ENCODE measurements at regions of chr2 and their contacts with region 1.

Region 1: DNA sequence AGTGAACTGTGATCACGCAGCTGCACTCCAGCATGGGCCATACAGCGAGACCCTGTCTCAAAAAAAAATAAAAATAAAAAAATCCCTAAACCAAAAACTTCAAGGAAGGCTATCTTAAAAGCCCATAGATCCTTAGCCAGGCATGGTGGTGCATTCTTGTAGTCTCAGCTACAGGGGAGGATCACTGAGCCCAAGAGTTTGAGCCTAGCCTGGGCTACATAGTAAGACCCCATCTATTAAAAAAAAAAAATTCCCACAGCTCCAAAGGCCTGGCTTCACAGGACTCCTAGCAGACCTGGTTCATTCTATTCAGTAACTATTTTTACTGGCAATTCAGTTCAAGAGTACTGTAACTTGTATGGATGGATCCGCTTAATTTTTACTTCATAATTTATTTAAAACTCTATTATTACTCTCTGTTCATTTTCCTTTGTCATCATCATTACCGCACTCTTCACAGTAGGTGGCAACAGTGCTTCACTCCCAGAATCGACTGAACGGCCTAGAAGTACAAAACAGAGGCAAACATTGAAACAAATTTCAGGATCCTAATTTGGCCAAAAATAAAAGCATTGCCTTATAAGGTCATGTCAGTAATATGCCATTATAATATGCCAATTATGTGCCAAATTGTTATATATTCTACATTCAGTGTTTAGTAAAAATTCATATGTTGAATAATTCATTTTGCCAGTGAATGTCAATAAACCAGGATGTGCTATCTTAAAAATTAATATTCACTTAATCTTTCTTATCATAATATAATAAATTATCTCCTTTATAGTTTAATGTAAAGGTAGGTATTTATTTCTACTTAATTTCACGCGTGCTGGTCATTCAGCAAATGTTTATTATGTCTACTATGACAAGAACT is 14.3 kb upstream of the STAM2 start:
- DNase-seq: no peak
- H3K4me3 ChIP-seq: no peak overlapping the region
- H3K27ac ChIP-seq: no peak overlapping the region
- H3K4me1 ChIP-seq: no peaks in the 10 kb centered on the region
- H3K27me3 ChIP-seq: peaks cover 0 to 3% (median 0%) of the 10 kb centered on the region in 4 donors
- CTCF ChIP-seq: peak; percentile 77 to 79 (median 78)
- EP300 ChIP-seq: no peak
- POLR2A ChIP-seq: no peak

Region 2: DNA sequence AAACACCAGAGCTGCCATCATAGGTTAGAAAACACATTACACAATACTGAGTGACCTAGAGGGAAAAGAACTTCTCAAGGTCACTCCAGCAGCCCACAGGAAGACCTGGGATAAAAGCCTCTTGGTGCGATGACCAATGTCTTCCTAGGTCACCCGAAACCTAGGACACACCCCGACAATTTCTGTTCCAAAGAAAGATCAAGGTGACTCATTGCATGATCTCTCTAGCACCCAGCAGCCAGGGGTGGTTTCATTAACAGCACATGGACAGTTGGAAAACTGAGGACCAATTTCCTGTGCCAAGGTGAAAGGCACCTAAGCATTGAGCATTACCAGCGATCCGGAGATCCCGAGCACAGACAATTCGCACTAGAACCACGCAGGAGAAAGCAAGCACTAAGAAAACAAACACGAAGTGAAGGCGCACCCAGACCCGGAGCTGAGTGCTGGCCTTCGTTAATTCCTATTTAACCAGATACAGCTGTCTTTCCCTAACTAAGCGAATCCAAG is 92.5 kb before region 1 on chr2:
- intact Hi-C with region 1: no loop called
- DNase-seq: no peak
- H3K4me3 ChIP-seq: peak overlapping the region; percentile 60 to 79 (median 68)
- H3K27ac ChIP-seq: peak overlapping the region; percentile 60 to 75 (median 64)
- H3K4me1 ChIP-seq: peaks cover 17 to 34% (median 28%) of the 10 kb centered on the region in 4 donors
- H3K27me3 ChIP-seq: peaks cover 0 to 39% (median 8%) of the 10 kb centered on the region in 4 donors
- CTCF ChIP-seq: no peak
- EP300 ChIP-seq: no peak
- POLR2A ChIP-seq: no peak

Region 3: DNA sequence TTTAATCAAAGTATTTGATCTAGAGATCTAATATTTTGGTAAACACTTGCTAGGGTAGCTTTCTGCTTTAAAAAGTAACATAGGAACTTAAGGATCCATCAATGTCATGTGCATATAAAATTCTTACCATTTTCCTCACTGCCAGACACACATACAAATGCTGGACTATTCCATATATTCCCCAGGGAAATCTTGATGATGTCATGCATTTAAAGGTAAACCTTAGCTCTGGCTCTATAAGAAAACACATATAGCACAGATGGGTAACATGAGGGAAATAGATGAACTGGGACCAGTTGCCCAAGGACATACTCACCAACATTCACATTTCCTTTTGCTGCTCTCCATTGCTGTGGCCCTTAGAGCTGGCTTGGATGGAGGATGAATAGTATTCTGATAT is 66.1 kb after region 1 on chr2:
- intact Hi-C with region 1: no loop called
- DNase-seq: no peak
- H3K4me3 ChIP-seq: no peak overlapping the region
- H3K27ac ChIP-seq: no peak overlapping the region
- H3K4me1 ChIP-seq: no peaks in the 10 kb centered on the region
- H3K27me3 ChIP-seq: no peaks in the 10 kb centered on the region
- CTCF ChIP-seq: no peak
- EP300 ChIP-seq: no peak
- POLR2A ChIP-seq: no peak

Region 4: DNA sequence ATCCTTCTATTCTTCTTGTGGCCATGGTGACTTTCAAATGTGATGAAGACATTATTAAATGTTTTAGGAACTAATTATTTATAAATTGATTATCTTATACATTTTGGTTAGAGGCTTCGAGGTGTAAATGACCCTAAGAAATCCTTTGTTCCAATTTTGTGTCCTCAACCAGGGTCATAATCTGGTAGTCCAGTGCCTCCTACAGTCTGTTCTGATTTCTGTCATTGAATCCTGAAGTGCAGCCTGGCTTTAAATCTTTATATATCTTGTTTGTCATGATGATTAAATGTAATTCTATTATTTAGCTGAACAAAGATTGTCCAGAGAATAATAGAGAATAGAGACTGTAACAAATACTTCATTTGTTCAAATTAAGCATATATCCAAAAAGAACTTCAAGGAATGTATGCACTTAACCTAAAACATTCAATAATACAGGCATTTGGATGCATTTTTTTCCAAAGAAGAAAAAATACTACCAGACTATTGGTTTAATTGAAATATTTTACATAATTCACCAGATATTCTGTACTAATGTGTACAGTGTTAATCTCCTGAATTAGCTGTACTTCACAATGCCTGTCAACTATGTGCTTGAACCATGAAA is 437.6 kb after region 1 on chr2:
- intact Hi-C with region 1: loop called (anchors 2 kb)
- DNase-seq: no peak
- H3K4me3 ChIP-seq: no peak overlapping the region
- H3K27ac ChIP-seq: no peak overlapping the region
- H3K4me1 ChIP-seq: peaks cover 0 to 5% (median 0%) of the 10 kb centered on the region in 4 donors
- H3K27me3 ChIP-seq: no peaks in the 10 kb centered on the region
- CTCF ChIP-seq: peak; percentile 46 to 52 (median 51)
- EP300 ChIP-seq: no peak
- POLR2A ChIP-seq: no peak

Region 5: GRCh38 chr2:152635635-152636298 is 445.9 kb after region 1 on chr2:
- intact Hi-C with region 1: loop called (anchors 2 kb)
- DNase-seq: no peak
- H3K4me3 ChIP-seq: no peak overlapping the region
- H3K27ac ChIP-seq: no peak overlapping the region
- H3K4me1 ChIP-seq: peaks cover 0 to 6% (median 3%) of the 10 kb centered on the region in 4 donors
- H3K27me3 ChIP-seq: no peaks in the 10 kb centered on the region
- CTCF ChIP-seq: peak; percentile 77 to 85 (median 78)
- EP300 ChIP-seq: no peak
- POLR2A ChIP-seq: no peak